ENCODE measurements at regions of chr22 and their contacts with region 1.

Region 1: DNA sequence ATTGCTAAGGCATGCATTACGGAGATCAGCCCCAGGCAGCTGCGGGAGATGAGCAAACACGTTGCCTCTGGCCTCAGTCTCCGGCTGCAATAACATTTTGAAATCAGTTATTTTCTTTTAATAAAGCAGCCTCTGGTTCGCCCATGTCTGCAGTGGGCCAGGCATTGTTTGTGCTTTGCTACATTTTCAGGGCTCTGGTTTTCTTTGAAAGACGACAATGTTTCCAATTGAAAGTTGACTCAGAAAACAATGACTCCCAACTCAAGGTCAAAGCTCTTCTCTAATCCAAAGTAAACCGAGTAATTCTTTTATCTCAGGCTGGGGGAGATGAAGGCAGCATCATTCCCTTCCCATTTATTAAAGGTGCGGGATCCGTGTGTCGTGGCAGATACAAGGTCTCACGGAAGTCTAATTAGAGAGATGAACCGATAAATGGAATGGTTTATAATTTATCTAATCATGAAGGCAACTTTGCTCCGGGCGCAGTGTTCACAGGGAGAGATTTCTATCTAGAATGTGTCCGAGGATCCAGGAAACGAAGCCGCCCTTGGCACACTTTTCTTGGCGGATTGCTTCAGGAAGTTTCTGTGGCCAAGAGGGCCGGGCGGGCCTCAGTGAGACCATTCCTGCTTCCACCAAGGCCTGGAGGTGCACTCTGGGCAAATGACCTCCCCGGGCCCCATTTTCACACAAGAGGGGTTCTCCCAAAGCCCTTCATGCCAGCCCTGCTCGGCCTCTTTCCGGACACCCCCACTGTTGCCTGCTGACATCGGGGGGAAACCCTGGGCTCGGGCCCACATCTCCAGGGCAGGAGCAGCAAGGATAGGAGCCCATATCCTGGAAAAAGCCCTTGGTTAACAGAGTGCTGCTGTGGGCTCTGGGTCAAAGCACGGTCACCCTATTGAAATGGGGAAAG is 811.4 kb downstream of the BRD1 start:
- DNase-seq: no peak
- H3K4me3 ChIP-seq: no peak overlapping the region
- H3K27ac ChIP-seq: no peak overlapping the region
- H3K4me1 ChIP-seq: no peaks in the 10 kb centered on the region
- H3K27me3 ChIP-seq: peaks cover 0 to 4% (median 0%) of the 10 kb centered on the region in 4 donors
- CTCF ChIP-seq: no peak
- POLR2A ChIP-seq: no peak

Region 2: DNA sequence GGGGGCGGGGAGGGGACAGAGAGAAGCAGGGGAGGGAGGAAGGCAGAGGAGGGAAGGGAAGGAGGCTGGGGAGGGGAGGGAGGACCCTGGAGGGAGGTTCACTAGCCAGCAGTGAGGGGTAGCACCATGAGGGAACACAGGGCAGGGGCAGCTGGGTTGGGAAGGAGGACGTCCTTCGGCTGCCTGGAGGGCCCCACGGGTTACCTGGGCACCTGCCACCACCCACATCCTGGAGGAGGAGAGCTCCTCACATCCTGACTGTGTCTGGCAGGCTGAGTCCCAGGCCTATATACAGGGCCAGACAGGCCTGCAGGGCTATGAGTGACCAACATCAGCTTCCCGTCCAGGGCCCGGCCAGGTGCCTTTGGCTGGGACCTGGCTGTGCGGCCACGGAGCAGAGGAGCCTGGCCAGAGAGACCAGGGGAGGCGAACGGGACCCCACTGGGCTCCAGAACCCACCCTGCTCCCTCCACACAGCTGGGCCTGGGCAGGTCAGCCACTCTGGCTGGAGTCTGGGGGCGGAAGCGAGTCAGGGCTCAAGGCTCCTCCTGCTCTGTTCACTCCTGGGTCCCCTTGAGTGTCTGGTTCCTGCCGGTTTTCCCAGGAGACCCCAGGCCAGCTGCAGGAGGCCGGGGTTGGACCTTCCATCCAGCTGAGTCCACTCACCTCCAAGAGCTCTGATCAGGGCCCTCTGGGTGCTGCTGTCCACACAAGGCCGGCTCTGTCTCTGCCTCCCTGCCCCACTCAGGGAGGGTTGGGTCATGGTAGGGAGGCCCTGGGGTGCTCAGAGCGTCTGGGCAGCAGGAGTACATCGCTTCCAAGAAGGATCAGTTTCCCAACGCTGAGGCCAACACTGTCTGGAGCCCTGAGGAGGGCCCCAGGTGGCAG is 133.7 kb after region 1 on chr22:
- intact Hi-C with region 1: loop called (anchors 10 kb)
- DNase-seq: no peak
- H3K4me3 ChIP-seq: no peak overlapping the region
- H3K27ac ChIP-seq: no peak overlapping the region
- H3K4me1 ChIP-seq: no peaks in the 10 kb centered on the region
- H3K27me3 ChIP-seq: peaks cover 0 to 69% (median 0%) of the 10 kb centered on the region in 4 donors
- CTCF ChIP-seq: no peak
- POLR2A ChIP-seq: no peak